ENCODE measurements at regions of chr5 and their contacts with region 1.

Region 1: DNA sequence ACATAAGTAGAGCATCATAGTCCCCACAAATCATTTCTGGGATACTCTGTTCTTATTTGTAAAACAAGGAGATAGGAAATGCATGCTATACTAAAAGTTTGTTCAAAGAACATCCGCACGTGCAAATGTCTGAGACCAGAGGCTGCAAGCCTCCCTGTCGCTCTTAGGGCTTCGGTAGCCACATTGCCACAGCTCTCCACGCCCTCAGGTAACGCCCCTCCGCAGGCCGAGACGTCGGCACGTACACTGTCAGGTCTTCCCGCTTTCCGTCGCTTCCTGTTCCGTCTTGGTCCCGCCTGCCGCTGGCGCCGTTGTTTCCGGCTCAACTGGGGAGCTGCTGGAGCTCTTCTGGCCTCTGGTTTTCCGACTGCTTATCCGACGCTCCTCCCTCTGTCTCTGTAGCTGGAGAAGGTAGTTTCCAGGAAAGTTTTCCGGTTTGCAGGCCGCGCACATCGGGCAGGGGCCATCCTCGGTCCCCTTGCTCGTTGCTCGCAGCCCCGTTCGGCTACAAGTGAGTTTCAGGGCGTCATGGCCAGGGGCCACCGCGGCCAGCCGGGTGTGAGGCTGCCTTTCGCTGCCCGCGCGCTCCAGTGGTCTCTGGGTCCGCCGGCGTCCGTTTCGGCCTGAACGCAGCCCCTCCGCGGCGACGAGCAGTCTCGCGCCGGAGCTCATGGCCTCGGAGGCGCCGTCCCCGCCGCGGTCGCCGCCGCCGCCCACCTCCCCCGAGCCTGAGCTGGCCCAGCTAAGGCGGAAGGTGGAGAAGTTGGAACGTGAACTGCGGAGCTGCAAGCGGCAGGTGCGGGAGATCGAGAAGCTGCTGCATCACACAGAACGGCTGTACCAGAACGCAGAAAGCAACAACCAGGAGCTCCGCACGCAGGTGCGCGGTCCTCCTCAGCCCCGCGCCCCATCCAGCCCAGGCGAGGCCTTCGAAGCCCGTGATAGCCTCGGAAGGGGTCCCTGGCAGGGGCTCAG is at the start of gene AGGF1:
- DNase-seq: peak; percentile 93 to 96
- H3K4me3 ChIP-seq: peak within 1 kb of the TSS; percentile 68
- H3K4me3 Mint-ChIP-seq: peak within 1 kb of the TSS; percentile 88
- H3K27ac Mint-ChIP-seq: peak within 1 kb of the TSS; percentile 78
- H3K4me1 ChIP-seq: 0 out of 2 replicates have a peak, but pooled peaks cover 9% of the 10 kb centered on the region
- H3K4me1 Mint-ChIP-seq: no peaks in the 10 kb centered on the region
- H3K27me3 ChIP-seq: no peaks in the 10 kb centered on the region
- H3K27me3 Mint-ChIP-seq: no peaks in the 10 kb centered on the region
- CTCF ChIP-seq: no peak
- total RNA-seq, gene AGGF1: 20.2 and 28.6 TPM in 2 replicates

Region 2: DNA sequence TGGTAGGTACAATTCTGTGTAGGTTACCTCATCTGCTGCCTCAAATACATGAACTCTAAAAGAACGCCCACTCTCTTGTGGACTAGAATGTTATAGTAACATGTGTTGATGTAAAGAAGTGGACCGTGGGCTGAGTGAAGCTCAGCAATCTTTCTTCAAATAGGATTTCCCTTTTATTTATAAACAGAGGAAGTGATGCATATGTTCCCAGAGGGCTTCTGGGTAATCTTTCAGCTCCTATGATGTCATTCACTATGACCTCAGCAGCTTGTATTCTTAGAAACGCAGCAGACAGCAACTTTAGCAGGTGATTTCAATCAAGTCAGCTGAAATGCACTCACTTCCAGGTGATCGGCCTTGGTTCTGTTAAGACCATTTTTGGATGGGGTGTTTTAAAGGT is 421.6 kb before region 1 on chr5:
- CTCF ChIA-PET with region 1: no interaction called
- POLR2A ChIA-PET with region 1: no interaction called
- intact Hi-C with region 1: loop called (anchors 5 kb)
- DNase-seq: no peak
- H3K4me3 ChIP-seq: no peak overlapping the region
- H3K4me3 Mint-ChIP-seq: no peak overlapping the region
- H3K27ac Mint-ChIP-seq: no peak overlapping the region
- H3K4me1 ChIP-seq: no peaks in the 10 kb centered on the region
- H3K4me1 Mint-ChIP-seq: peaks cover 9% of the 10 kb centered on the region
- H3K27me3 ChIP-seq: no peaks in the 10 kb centered on the region
- H3K27me3 Mint-ChIP-seq: no peaks in the 10 kb centered on the region
- CTCF ChIP-seq: no peak

Region 3: GRCh38 chr5:76983468-76983867 is 46.9 kb before region 1 on chr5:
- CTCF ChIA-PET with region 1: no interaction called
- POLR2A ChIA-PET with region 1: no interaction called
- intact Hi-C with region 1: no loop called
- DNase-seq: no peak
- H3K4me3 ChIP-seq: no peak overlapping the region
- H3K4me3 Mint-ChIP-seq: no peak overlapping the region
- H3K27ac Mint-ChIP-seq: no peak overlapping the region
- H3K4me1 ChIP-seq: no peaks in the 10 kb centered on the region; the same call in 1 of the 2 replicates
- H3K4me1 Mint-ChIP-seq: peaks cover 7% of the 10 kb centered on the region
- H3K27me3 ChIP-seq: no peaks in the 10 kb centered on the region
- H3K27me3 Mint-ChIP-seq: no peaks in the 10 kb centered on the region
- CTCF ChIP-seq: no peak

Region 4: GRCh38 chr5:77073667-77074066 is 43.3 kb after region 1 on chr5:
- CTCF ChIA-PET with region 1: no interaction called
- POLR2A ChIA-PET with region 1: no interaction called
- intact Hi-C with region 1: loop called (anchors 5 kb)
- DNase-seq: no peak
- H3K4me3 ChIP-seq: no peak overlapping the region
- H3K4me3 Mint-ChIP-seq: no peak overlapping the region
- H3K27ac Mint-ChIP-seq: no peak overlapping the region
- H3K4me1 ChIP-seq: no peaks in the 10 kb centered on the region
- H3K4me1 Mint-ChIP-seq: peaks cover 7% of the 10 kb centered on the region
- H3K27me3 ChIP-seq: no peaks in the 10 kb centered on the region
- H3K27me3 Mint-ChIP-seq: no peaks in the 10 kb centered on the region
- CTCF ChIP-seq: no peak

Measured in Caco-2 (cell line).